IMR-90 (cell line): ENCODE measurements at regions of chr2 and their contacts with region 1.

Region 1: DNA sequence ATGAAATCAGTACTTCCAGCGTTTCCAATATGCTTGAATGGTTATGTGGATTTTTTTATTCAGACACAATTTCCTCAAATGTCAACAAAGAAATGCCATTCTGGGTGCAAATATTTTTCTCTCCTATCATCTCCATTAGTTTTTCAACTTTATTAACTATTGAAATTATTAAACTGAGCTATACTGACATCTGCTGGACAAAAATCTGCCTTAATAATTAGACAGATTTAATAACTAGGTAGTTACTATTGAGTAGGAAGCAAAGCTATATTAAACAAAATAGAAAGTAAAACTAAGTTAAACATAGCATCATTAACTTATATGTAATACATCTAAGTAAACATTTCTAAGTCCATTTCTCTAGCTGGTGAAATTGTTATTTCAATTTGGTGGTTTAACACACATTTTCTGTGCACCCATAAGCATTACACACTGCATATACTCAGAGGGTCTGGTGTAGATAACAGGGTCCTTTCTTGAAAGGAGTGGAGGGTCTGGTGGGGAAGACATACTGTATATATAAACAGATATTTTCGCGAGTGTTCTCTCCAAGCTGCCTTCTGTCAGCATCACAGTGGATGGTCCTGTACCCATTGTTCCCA is 77.0 kb downstream of the LANCL1 start:
- DNase-seq: peak; percentile 7
- ATAC-seq: peak; percentile 37; the same call in 1 of the 2 replicates
- H3K4me3 ChIP-seq: no peak overlapping the region
- H3K27ac ChIP-seq: no peak overlapping the region
- H3K4me1 ChIP-seq: no peaks in the 10 kb centered on the region
- H3K27me3 ChIP-seq: no peaks in the 10 kb centered on the region
- CTCF ChIP-seq: peak; percentile 45
- POLR2A ChIP-seq: no peak
- RAD21 ChIP-seq: no peak

Region 2: GRCh38 chr2:208407667-208408066 is 1991.9 kb before region 1 on chr2:
- CTCF ChIA-PET with region 1: no interaction called
- POLR2A ChIA-PET with region 1: no interaction called
- dilution Hi-C with region 1: no loop called
- in situ Hi-C with region 1: no loop called
- intact Hi-C with region 1: loop called (anchors 10 kb)
- DNase-seq: peak; percentile 2
- ATAC-seq: no peak
- H3K4me3 ChIP-seq: no peak overlapping the region
- H3K27ac ChIP-seq: no peak overlapping the region
- H3K4me1 ChIP-seq: peaks cover 5% of the 10 kb centered on the region; the same call in 1 of the 2 replicates
- H3K27me3 ChIP-seq: peaks cover 23% of the 10 kb centered on the region
- CTCF ChIP-seq: peak; percentile 37
- POLR2A ChIP-seq: no peak
- RAD21 ChIP-seq: peak; percentile 45

Region 3: DNA sequence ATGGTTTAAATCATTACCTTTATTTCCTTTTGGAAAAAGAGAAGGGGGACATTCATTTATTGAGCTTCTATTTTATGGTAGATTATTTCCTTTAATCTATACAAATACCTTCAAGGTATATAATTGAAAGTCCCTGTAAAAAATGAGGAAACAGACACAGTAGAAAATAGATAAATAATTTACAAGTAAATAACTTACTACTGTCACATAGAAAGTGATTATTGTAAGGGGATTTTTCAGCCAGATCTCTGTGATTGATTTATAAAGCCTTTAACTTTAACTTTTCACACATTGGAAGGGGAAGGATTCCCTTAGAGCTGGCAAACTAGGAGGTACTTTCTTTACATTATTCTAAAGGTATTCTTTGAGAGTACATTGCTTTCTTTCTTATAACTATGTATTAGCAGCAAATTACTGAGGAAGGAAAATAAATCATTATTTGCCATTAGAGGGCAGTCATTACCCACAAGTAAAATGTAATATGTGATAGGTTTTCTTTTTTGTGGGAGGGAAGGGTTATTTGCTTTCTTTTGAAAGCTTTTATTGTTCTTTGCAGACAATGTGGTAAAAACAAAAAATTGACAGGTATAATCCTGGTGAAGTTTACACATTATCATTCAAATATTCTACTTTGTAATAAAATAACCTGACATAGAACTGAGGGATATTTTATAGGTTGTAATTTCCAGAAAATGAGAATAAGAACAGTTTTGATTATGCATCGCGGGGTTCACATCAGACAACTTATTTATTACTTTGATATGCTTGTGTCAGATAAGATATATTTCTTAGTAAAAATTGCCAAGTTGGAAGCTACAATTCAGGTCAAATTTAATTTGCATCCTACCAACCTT is 421.9 kb before region 1 on chr2:
- CTCF ChIA-PET with region 1: interaction called, 3 read pairs
- POLR2A ChIA-PET with region 1: no interaction called
- dilution Hi-C with region 1: no loop called
- in situ Hi-C with region 1: loop called (anchors 10 kb)
- intact Hi-C with region 1: loop called (anchors 2 kb)
- DNase-seq: peak; percentile 44
- ATAC-seq: peak; percentile 54; the same call in 1 of the 2 replicates
- H3K4me3 ChIP-seq: no peak overlapping the region
- H3K27ac ChIP-seq: no peak overlapping the region
- H3K4me1 ChIP-seq: no peaks in the 10 kb centered on the region
- H3K27me3 ChIP-seq: no peaks in the 10 kb centered on the region; the same call in 1 of the 2 replicates
- CTCF ChIP-seq: peak; percentile 60
- POLR2A ChIP-seq: no peak
- RAD21 ChIP-seq: peak; percentile 68

Region 4: DNA sequence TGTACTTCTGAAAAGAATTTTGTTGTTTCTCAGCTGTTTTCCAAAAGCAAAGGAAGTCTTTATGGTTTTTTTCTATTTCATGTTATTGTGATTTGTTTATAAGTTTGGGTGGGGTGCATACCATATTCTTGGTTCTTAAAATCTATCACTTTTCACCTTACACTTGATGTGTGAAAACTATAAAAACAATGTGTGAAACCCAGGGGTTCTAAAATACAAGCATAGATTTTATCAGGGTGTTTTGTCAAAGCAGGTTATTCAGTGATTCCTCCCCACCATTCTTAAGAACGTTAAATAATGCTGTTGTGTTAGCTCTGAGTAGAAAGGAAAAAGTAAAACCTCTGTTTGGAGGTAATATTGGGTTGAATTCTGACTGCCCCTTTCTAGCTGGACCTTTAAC is 379.4 kb before region 1 on chr2:
- CTCF ChIA-PET with region 1: no interaction called
- POLR2A ChIA-PET with region 1: no interaction called
- dilution Hi-C with region 1: no loop called
- in situ Hi-C with region 1: no loop called
- intact Hi-C with region 1: no loop called
- DNase-seq: no peak
- ATAC-seq: no peak
- H3K4me3 ChIP-seq: no peak overlapping the region
- H3K27ac ChIP-seq: no peak overlapping the region
- H3K4me1 ChIP-seq: no peaks in the 10 kb centered on the region
- H3K27me3 ChIP-seq: no peaks in the 10 kb centered on the region
- CTCF ChIP-seq: no peak
- POLR2A ChIP-seq: no peak
- RAD21 ChIP-seq: no peak

Region 5: DNA sequence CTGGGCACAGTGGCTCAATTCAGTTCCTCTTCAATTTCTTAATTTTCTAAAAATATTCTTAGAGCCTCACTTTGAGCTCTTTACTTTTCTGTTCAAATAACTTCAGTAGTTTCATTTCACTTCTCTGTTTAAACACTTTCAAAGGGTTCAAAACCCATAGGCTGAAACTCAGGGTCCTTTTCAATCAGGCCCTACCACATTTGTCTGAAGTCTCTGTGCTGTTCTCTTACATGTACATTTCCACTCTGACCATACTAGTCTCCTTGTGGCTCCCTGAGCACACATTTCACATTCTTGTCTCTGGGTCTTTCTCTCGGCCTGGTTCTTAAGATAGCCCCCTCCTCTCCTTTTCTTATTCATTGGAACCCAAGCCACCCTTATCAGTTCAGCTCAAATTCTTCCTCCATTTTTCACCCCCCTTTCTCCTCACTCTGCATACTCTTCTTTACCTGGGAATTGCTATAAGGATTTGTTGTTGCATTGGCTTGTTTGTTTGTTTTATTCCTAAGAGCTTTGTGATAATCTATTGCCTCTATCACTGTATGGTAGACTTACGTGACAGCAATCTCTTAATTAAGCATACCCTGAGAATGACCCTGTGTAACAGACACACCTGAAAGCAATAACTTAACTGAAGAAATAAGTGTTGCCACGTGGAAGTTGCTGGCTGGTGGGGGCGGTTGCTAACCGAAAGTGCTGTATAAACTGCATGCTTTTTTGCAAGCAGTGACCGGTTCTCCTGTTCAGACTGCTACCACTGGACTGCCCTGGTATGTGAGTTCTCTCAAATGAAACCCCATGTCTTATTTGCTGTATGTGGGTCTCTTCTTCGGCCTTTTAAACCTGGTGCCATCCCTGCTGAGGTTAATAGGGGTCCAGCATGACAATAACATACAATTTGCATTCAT is 146.6 kb before region 1 on chr2:
- CTCF ChIA-PET with region 1: no interaction called
- POLR2A ChIA-PET with region 1: no interaction called
- dilution Hi-C with region 1: no loop called
- in situ Hi-C with region 1: no loop called
- intact Hi-C with region 1: loop called (anchors 1 kb)
- DNase-seq: no peak
- ATAC-seq: no peak
- H3K4me3 ChIP-seq: no peak overlapping the region
- H3K27ac ChIP-seq: no peak overlapping the region
- H3K4me1 ChIP-seq: no peaks in the 10 kb centered on the region
- H3K27me3 ChIP-seq: no peaks in the 10 kb centered on the region
- CTCF ChIP-seq: no peak
- POLR2A ChIP-seq: no peak
- RAD21 ChIP-seq: no peak

Region 6: GRCh38 chr2:210814251-210815025 is 414.9 kb after region 1 on chr2:
- CTCF ChIA-PET with region 1: no interaction called
- POLR2A ChIA-PET with region 1: no interaction called
- dilution Hi-C with region 1: no loop called
- in situ Hi-C with region 1: no loop called
- intact Hi-C with region 1: no loop called
- DNase-seq: no peak
- ATAC-seq: no peak
- H3K4me3 ChIP-seq: no peak overlapping the region
- H3K27ac ChIP-seq: no peak overlapping the region
- H3K4me1 ChIP-seq: no peaks in the 10 kb centered on the region
- H3K27me3 ChIP-seq: no peaks in the 10 kb centered on the region
- CTCF ChIP-seq: no peak
- POLR2A ChIP-seq: no peak
- RAD21 ChIP-seq: no peak